ENCODE measurements at regions of chr14 and their contacts with region 1.

Region 1: GRCh38 chr14:68318828-68319227 is 474.0 kb downstream of the ZFP36L1 start:
- DNase-seq: no peak
- H3K4me3 ChIP-seq: no peak overlapping the region
- H3K27ac ChIP-seq: peak overlapping the region in 3 of 59 donors; percentile 2 to 12 (median 11)
- H3K27me3 ChIP-seq: no peaks in the 10 kb centered on the region
- CTCF ChIP-seq: no peak

Region 2: DNA sequence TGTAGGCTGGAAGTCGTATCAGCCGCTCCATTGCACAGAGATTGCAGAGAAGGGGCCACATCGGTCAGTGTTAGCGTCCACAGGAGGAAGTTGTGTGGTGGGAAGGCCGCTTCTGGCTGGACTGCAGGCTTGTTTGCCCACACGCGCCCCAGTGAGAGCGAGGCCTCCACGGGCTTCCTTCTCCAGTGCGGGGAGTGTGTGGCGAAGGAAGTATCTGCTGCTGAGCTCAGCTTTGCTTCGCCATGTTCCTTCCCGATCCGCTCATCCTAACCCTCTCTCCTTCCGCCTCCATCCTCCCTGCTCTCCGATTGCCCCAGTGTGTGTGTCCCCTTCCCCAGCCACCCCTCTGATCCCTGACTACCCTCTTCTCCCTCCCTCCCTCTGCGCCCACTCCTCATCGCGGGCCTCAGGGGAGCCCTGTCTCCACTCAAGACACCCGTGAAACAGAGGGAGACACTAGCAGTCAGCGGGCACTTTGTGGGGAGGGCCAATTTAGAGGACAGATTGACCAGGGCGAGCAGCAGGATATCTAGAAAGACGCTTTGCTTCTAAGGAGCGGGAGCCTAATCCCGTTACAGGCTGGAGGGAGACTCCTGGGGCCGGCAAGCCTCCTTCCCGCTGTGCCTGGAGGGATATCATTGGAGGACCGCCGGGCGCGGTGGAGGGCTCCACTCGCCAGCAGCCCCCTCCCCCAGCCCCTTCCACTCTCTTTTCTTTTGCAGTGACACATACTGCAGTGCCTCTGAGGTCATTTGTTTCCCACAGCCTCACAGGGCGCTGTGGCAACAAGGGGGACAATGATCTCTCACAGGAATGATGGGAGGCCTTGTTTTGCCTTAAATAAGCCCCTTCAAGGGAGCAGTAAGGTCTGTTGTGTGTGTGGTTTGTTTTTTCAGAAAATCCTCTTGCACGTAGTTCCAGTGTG is 45.3 kb after region 1 on chr14:
- intact Hi-C with region 1: no loop called
- DNase-seq: peak in 4 of 10 donors; percentile 37 to 54 (median 48)
- H3K4me3 ChIP-seq: peak overlapping the region in 21 of 59 donors; percentile 0 to 48 (median 18)
- H3K27ac ChIP-seq: peak overlapping the region in 57 of 59 donors; percentile 30 to 91 (median 79)
- H3K27me3 ChIP-seq: peaks cover 0 to 4% (median 0%) of the 10 kb centered on the region in 45 donors
- CTCF ChIP-seq: peak in 1 of 56 donors; percentile 3

Region 3: GRCh38 chr14:68392393-68393141 is 73.7 kb after region 1 on chr14:
- intact Hi-C with region 1: loop called in 1 of 2 experiments (anchors 5 kb)
- DNase-seq: peak in 5 of 10 donors; percentile 32 to 47 (median 37)
- H3K4me3 ChIP-seq: no peak overlapping the region
- H3K27ac ChIP-seq: peak overlapping the region in 56 of 59 donors; percentile 15 to 85 (median 68)
- H3K27me3 ChIP-seq: no peaks in the 10 kb centered on the region
- CTCF ChIP-seq: no peak